PC-9 (cell line): ENCODE measurements at regions of chr20 and their contacts with region 1.

Region 1: GRCh38 chr20:34390769-34391452 is 27.8 kb downstream of the ITCH start:
- DNase-seq: peak; percentile 94 to 96
- H3K4me3 ChIP-seq: peak overlapping the region; percentile 31; the same call in 1 of the 2 replicates
- H3K27ac ChIP-seq: peak overlapping the region; percentile 76
- H3K4me1 ChIP-seq: peaks cover 59% of the 10 kb centered on the region
- H3K27me3 ChIP-seq: no peaks in the 10 kb centered on the region
- CTCF ChIP-seq: no peak

Region 2: GRCh38 chr20:34215711-34216381 is 175.1 kb before region 1 on chr20:
- CTCF ChIA-PET with region 1: no interaction called
- POLR2A ChIA-PET with region 1: no interaction called
- intact Hi-C with region 1: no loop called
- DNase-seq: peak; percentile 52 to 90
- H3K4me3 ChIP-seq: peak overlapping the region; percentile 43; the same call in 1 of the 2 replicates
- H3K27ac ChIP-seq: no peak overlapping the region
- H3K4me1 ChIP-seq: 0 out of 2 replicates have a peak, but pooled peaks cover 6% of the 10 kb centered on the region
- H3K27me3 ChIP-seq: peaks cover 3% of the 10 kb centered on the region; the same call in 1 of the 2 replicates
- CTCF ChIP-seq: no peak

Region 3: DNA sequence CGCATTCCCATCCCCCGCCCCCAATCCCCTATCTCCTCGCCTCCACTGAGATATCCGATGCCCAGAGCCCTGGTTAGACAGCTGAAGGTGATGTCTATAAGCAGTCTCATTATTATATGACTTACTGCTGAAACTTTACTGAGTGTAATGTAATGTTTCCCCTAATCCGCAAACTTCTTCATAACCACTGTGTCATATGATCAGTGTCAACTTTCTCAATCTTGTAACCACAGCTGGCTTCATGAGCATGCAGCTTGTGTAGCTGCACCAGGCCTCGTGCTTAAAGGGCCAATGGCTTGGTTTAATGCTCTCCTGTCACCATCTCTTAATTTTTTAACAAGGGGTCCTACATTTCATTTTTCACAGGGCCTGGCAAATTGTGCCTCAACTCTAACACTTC is 141.6 kb before region 1 on chr20:
- CTCF ChIA-PET with region 1: no interaction called
- POLR2A ChIA-PET with region 1: interaction called, 12 read pairs
- intact Hi-C with region 1: no loop called
- DNase-seq: no peak
- H3K4me3 ChIP-seq: no peak overlapping the region
- H3K27ac ChIP-seq: no peak overlapping the region
- H3K4me1 ChIP-seq: peaks cover 5% of the 10 kb centered on the region; the same call in 1 of the 2 replicates
- H3K27me3 ChIP-seq: no peaks in the 10 kb centered on the region
- CTCF ChIP-seq: no peak

Region 4: GRCh38 chr20:34368547-34368946 is 22.4 kb before region 1 on chr20:
- CTCF ChIA-PET with region 1: interaction called, 8 read pairs
- POLR2A ChIA-PET with region 1: no interaction called
- intact Hi-C with region 1: loop called (anchors 2 kb)
- DNase-seq: no peak
- H3K4me3 ChIP-seq: peak overlapping the region; percentile 10; the same call in 1 of the 2 replicates
- H3K27ac ChIP-seq: peak overlapping the region; percentile 94
- H3K4me1 ChIP-seq: peaks cover 61% of the 10 kb centered on the region
- H3K27me3 ChIP-seq: no peaks in the 10 kb centered on the region
- CTCF ChIP-seq: no peak

Region 5: DNA sequence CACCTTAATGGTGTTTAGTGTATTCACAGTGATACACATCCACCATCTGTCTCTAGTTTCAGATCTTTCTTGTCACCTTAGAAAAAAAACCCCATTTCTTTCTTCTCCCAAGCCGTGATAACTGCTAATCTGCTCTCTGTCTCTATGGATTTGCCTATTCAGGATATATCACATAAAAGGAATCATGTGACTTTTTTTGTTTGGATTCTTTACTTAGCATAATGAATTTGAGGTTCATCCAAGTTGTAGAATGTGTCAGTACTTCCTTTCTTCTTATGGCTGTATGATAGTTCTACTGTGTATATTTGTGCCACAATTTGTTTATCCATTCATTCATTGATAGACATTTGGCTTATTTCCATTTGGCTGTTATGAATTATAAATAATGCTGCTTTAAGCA is 29.2 kb after region 1 on chr20:
- CTCF ChIA-PET with region 1: interaction called, 15 read pairs
- POLR2A ChIA-PET with region 1: no interaction called
- intact Hi-C with region 1: no loop called
- DNase-seq: no peak
- H3K4me3 ChIP-seq: no peak overlapping the region
- H3K27ac ChIP-seq: peak overlapping the region; percentile 11
- H3K4me1 ChIP-seq: 0 out of 2 replicates have a peak, but pooled peaks cover 2% of the 10 kb centered on the region
- H3K27me3 ChIP-seq: no peaks in the 10 kb centered on the region
- CTCF ChIP-seq: no peak

Region 6: GRCh38 chr20:34458631-34459030 is 67.7 kb after region 1 on chr20:
- CTCF ChIA-PET with region 1: no interaction called
- POLR2A ChIA-PET with region 1: no interaction called
- intact Hi-C with region 1: no loop called
- DNase-seq: no peak
- H3K4me3 ChIP-seq: no peak overlapping the region
- H3K27ac ChIP-seq: no peak overlapping the region
- H3K4me1 ChIP-seq: no peaks in the 10 kb centered on the region
- H3K27me3 ChIP-seq: no peaks in the 10 kb centered on the region
- CTCF ChIP-seq: no peak